HEK293 (cell line): ENCODE measurements at regions of chr9 and their contacts with region 1.

Region 1: DNA sequence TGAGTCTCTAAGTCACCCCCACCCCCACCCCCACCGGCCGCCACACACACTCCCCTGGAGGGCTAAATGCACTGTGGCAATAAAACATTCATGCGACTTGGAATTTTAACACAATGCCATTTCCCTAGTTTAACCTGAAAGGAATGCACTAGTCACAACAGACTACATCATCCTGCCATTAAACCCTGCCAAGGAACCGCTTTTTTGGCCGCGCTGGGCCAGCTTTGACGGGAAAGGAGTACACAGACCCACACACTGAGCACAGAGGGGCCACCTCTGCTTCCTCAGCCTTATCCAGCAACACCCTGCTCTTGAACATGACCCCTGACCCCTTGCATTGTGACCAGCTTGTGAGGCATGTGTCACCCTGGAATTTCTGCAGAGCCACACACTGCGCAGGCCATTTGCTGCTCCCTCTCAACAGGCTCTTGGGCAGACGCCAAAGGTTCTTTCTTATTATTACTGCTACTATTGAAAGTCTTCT is 165.3 kb downstream of the BNC2 start:
- H3K4me3 ChIP-seq: peak overlapping the region; percentile 42
- H3K27ac ChIP-seq: peak overlapping the region; percentile 86
- H3K4me1 ChIP-seq: peaks cover 10% of the 10 kb centered on the region; the same call in 1 of the 2 replicates
- CTCF ChIP-seq: no peak

Region 2: GRCh38 chr9:16689352-16689938 is 15.7 kb before region 1 on chr9:
- CTCF ChIA-PET with region 1: no interaction called
- POLR2A ChIA-PET with region 1: interaction called, 13 read pairs
- H3K4me3 ChIP-seq: no peak overlapping the region
- H3K27ac ChIP-seq: peak overlapping the region; percentile 63
- H3K4me1 ChIP-seq: peaks cover 22% of the 10 kb centered on the region
- CTCF ChIP-seq: no peak